ENCODE measurements at regions of chr5 and their contacts with region 1.

Region 1: GRCh38 chr5:67209142-67209771 is 12.7 kb upstream of the CD180 start:
- DNase-seq: peak; percentile 85
- ATAC-seq: peak; percentile 47
- H3K4me3 ChIP-seq: no peak overlapping the region
- H3K27ac ChIP-seq: no peak overlapping the region
- H3K4me1 ChIP-seq: peaks cover 53% of the 10 kb centered on the region
- H3K27me3 ChIP-seq: no peaks in the 10 kb centered on the region
- CTCF ChIP-seq: peak; percentile 68

Region 2: DNA sequence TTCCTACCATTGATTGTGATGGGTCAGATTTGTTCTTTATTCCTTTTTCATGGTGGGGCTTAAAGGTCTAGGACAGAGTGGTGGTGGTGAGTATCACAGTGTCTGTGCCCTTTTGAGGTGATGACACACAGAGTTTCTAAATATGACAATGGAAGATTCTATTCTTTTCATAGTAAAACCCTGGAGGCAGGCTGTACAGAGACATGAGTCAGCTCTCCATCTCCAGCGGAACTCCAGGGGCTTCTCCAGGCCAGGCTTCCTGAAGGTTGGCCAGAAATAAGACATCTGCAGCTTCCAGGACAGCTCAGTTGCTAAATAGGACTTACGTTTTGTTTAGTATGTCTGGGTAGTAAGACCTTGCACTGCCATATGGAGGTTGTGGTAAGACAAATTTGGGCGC is 242.2 kb before region 1 on chr5:
- CTCF ChIA-PET with region 1: no interaction called
- POLR2A ChIA-PET with region 1: no interaction called
- intact Hi-C with region 1: no loop called
- DNase-seq: no peak
- ATAC-seq: no peak; the same call in 1 of the 2 replicates
- H3K4me3 ChIP-seq: no peak overlapping the region
- H3K27ac ChIP-seq: no peak overlapping the region
- H3K4me1 ChIP-seq: peaks cover 12% of the 10 kb centered on the region
- H3K27me3 ChIP-seq: no peaks in the 10 kb centered on the region
- CTCF ChIP-seq: no peak

Region 3: DNA sequence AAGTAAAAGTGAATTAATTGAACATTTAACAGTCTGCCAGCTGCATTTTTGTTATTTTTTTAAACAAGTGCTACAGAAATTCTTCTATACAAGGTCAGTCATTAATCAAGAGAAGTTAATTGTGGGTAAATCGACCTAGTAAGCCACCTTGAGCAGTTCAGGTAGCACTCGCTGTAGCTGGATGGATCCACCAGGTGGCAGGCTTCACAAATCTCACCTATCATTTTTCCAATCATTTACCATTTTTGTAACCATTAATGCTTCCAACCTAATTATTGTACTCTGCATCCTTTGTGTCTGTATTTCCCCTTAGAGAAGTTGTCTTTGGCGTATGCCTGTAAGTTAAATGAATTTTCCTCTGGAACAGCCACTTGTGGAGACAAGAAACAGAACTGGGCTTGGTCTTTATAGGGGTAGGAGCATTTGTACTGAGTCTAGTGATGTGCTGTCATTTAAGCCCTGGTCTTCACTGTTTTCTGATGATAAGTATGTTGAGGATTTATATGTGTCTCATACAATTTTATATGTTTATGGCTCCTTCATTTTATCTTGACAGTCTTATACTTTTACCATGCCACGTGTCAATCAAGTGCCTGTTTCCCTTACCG is 52.2 kb before region 1 on chr5:
- CTCF ChIA-PET with region 1: interaction called, 7 read pairs
- POLR2A ChIA-PET with region 1: no interaction called
- intact Hi-C with region 1: loop called (anchors 1 kb)
- DNase-seq: peak; percentile 63
- ATAC-seq: peak; percentile 19; the same call in 1 of the 2 replicates
- H3K4me3 ChIP-seq: no peak overlapping the region
- H3K27ac ChIP-seq: no peak overlapping the region
- H3K4me1 ChIP-seq: peaks cover 31% of the 10 kb centered on the region
- H3K27me3 ChIP-seq: no peaks in the 10 kb centered on the region
- CTCF ChIP-seq: peak; percentile 82

Region 4: GRCh38 chr5:67255881-67256280 is 46.6 kb after region 1 on chr5:
- CTCF ChIA-PET with region 1: no interaction called
- POLR2A ChIA-PET with region 1: no interaction called
- intact Hi-C with region 1: no loop called
- DNase-seq: no peak
- ATAC-seq: no peak
- H3K4me3 ChIP-seq: no peak overlapping the region
- H3K27ac ChIP-seq: no peak overlapping the region
- H3K4me1 ChIP-seq: no peaks in the 10 kb centered on the region; the same call in 1 of the 2 replicates
- H3K27me3 ChIP-seq: no peaks in the 10 kb centered on the region
- CTCF ChIP-seq: no peak